HAP-1 (cell line): ENCODE measurements at regions of chr5 and their contacts with region 1.

Region 1: DNA sequence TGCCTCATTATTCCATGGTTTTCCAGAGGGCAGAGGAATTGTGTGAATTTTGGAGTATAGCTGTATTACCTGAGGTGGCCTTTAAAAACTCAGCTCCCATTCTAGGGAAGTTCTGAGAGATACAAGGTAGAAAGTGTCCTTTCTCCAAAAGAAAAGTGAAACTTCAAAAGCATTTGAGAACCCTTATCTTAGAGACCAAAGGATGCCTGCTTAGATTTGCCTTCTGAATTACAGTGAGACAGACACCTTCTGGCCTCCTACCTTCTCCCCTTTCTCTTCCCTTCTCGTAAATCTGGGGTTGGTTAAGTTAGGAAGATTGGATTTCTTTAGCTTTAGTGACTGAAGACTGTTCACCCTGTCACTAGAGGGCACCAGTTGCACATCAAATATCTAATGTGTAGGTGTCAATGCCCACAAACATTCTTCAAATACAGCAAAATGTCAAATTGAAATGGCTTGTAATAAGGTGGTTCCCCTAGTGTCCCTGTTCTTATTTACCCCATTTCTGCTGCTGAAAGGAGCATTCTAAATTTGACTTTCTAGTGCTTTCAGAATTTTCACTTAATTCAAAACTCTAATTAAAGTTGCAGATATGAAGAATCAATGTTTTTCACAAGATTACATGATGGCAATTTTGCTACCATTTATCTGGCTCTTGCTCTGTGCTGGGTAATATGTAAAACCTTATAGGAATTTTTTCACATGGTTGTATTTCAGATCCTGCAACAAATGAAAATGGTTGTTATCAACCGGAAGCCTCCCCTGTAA is 46.7 kb downstream of the PRRC1 start:
- DNase-seq: peak; percentile 67 to 76
- H3K4me3 ChIP-seq: no peak overlapping the region
- H3K4me1 ChIP-seq: no peaks in the 10 kb centered on the region
- H3K27me3 ChIP-seq: peaks cover 4% of the 10 kb centered on the region

Region 2: DNA sequence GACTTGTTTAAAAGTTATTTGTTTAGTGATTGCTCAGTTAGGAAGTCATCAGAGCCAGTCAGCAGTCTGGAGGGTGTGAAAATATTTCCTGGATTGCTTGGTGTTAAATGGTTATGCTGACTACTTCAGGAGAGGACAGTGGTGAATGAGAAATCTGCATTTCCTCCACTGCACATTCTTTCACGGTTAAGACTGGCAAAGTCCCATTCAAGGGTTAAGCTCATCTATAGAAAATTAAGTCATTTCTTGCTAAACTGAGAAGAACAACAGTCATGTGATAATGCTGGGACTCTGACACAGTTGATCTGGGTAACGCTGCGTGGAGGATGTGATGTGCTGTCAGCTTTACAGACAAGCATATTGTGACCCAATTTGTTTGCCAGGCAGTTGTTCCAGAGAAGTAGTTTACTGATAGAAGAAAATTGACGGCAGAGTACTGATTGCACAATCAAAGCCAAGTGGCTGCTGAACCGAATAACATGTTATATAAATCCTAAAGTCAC is 1060.5 kb before region 1 on chr5:
- in situ Hi-C with region 1: no loop called
- DNase-seq: no peak
- H3K4me3 ChIP-seq: no peak overlapping the region
- H3K4me1 ChIP-seq: no peaks in the 10 kb centered on the region
- H3K27me3 ChIP-seq: peaks cover 3% of the 10 kb centered on the region; the same call in 1 of the 2 replicates

Region 3: GRCh38 chr5:127757576-127757975 is 193.4 kb after region 1 on chr5:
- in situ Hi-C with region 1: loop called (anchors 25 kb)
- DNase-seq: peak; percentile 29 to 57
- H3K4me3 ChIP-seq: no peak overlapping the region
- H3K4me1 ChIP-seq: peaks cover 9% of the 10 kb centered on the region
- H3K27me3 ChIP-seq: no peaks in the 10 kb centered on the region

Region 4: GRCh38 chr5:127934791-127935256 is 370.6 kb after region 1 on chr5:
- in situ Hi-C with region 1: no loop called
- DNase-seq: peak; percentile 14 to 17
- H3K4me3 ChIP-seq: no peak overlapping the region
- H3K4me1 ChIP-seq: no peaks in the 10 kb centered on the region
- H3K27me3 ChIP-seq: no peaks in the 10 kb centered on the region